HEK293T (cell line): ENCODE measurements at regions of chr22 and their contacts with region 1.

Region 1: DNA sequence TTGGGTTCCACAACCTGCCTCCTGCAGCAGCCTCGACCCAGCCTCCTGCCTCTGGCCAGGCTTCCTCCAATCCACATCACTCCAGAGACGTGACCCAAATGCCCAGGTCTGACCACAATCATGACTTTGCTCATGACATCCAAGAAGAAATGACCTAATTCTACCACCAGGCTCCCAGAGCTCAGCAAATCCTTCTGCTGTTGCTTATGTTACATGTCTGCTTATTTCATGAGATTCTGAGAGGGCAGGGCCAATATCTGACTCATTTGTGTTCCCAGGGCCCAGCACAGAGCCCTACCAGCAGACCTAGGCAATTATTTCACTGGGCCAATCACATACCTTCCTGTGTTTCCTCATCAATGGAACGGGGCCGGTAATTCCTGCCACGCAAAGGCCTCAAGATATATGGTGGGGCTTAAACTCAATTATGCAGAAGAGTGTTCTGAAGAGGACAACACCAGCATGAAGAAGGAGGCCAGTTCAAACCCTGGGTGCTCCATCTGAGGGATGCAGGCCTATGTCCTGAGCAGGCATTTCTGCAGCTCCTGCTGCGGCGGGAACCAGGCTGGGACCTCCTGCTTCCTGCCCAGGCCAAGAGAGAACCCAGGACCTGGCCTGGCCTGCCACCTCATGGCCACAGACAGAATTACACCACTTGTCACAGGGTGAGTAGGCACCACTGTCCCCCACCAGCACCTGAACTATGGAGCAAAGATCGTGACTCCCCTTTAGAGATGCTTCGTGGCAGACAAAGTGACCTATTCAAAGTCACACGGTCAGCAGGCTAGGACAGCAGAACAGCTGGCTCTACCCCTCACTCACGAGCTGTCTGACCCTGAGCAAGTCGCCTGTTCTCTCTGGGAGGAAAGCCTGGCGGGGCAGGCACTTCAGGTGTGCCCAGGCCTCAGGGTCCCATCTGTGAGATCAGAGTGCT is 5.9 kb downstream of the CENPM start:
- DNase-seq: peak; percentile 76

Region 2: GRCh38 chr22:41925655-41926460 is 15.2 kb before region 1 on chr22:
- CTCF ChIA-PET with region 1: interaction called, 10 read pairs
- POLR2A ChIA-PET with region 1: interaction called, 6 read pairs
- DNase-seq: peak; percentile 84

Region 3: GRCh38 chr22:41983513-41984405 is 42.7 kb after region 1 on chr22:
- CTCF ChIA-PET with region 1: no interaction called
- POLR2A ChIA-PET with region 1: no interaction called
- DNase-seq: no peak

Region 4: GRCh38 chr22:41998361-41999275 is 57.5 kb after region 1 on chr22 and contains the start of gene WBP2NL:
- CTCF ChIA-PET with region 1: no interaction called
- POLR2A ChIA-PET with region 1: no interaction called
- DNase-seq: peak; percentile 3